ENCODE measurements at regions of chr2 and their contacts with region 1.

Region 1: DNA sequence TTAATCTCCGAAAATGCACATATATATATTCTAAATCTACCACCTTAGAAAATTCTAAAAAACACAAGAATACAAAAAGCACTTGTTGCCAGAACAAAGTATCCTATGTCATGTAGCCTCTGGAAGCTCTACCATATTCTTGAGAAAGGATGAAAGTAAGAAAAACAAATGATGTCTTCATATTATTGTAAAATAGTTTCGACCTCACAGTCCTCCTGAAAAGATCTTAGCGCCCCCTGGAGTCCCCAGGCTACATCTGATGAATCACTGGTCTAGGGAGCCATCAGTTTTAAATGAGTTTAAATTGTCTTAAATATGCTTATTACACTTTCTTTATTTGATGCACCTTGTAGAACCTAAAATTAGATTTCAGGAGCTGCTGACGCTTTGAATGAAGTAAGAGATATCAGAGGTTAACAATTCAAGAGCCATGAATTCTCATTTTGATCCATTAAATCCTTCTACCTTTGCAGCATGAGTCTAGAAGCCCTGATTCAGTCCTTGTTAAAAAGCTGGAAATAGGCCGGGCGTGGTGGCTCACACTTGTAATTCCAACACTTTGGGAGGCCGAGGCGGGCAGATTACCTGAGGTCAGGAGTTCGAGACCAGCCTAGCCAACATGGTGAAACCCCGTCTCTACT is 138.8 kb downstream of the MCFD2 start:
- DNase-seq: no peak
- H3K4me3 ChIP-seq: no peak overlapping the region
- CTCF ChIP-seq: peak; percentile 39

Region 2: DNA sequence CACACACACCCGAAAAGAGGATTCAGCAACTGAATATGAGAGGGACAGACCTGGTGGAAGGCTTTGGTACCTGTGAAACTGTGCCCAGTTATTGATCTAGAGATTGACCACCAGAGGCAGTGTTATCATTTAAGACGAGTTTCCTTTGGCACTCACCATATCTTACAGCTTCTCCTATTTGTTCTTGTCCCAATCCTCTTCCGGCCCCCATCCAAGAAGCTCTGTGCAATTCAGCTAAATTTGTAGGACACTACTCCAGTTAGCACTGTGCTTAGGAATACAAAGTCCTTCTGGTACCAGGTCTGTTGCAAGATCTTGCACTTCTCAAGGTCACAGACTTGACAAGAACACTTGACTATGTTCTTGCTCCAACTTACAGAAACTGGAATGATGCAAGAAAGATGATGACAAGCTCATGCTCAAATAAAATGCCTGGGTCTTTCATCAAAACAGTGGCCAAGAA is 119.7 kb before region 1 on chr2:
- CTCF ChIA-PET with region 1: interaction called, 15 read pairs
- POLR2A ChIA-PET with region 1: no interaction called
- DNase-seq: no peak
- H3K4me3 ChIP-seq: no peak overlapping the region
- CTCF ChIP-seq: peak; percentile 8

Region 3: GRCh38 chr2:46787364-46787763 is 10.6 kb after region 1 on chr2:
- CTCF ChIA-PET with region 1: interaction called, 38 read pairs
- POLR2A ChIA-PET with region 1: interaction called, 3 read pairs
- DNase-seq: no peak
- H3K4me3 ChIP-seq: no peak overlapping the region
- CTCF ChIP-seq: no peak

Region 4: DNA sequence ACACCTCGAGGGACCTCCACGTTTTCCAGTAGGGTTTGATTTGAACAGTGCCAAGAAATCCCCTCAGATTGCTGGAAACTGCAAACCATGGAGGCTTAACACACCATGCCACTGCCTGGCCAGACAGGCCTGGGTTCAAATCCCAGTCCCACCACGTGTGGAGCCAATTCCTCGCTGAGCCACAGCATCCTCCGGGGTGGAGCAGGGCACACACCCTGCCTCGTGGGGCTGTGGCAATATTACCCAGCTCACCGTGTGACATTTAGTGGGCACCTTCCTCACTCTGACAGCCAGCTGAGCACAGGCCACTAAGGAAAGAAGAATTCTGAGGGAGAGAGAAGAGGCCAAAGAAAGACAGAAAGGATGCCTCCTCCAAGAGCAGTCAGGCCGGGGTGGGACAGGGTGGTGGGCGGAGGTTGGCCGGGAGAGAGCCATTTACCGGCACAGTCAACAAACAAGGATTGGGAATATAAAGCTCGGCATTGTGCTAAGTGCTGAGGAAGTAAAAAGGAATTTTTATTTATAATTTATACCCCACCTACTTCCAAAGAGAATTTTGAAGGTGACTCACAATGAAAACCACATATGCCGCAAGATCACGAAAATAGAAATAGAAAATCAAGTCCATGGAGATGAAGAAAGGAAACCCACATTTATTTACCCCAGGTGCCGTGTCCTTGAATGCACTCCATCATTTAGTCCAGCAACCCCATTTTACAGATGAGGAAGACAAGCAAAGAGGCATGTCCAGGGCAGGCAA is 27.3 kb after region 1 on chr2:
- CTCF ChIA-PET with region 1: interaction called, 43 read pairs
- POLR2A ChIA-PET with region 1: interaction called, 3 read pairs
- DNase-seq: peak; percentile 81
- H3K4me3 ChIP-seq: no peak overlapping the region
- CTCF ChIP-seq: no peak

Region 5: GRCh38 chr2:46887028-46887885 is 110.5 kb after region 1 on chr2:
- CTCF ChIA-PET with region 1: interaction called, 11 read pairs
- POLR2A ChIA-PET with region 1: no interaction called
- DNase-seq: no peak
- H3K4me3 ChIP-seq: no peak overlapping the region
- CTCF ChIP-seq: no peak

Region 6: GRCh38 chr2:46942139-46942517 is 165.3 kb after region 1 on chr2:
- CTCF ChIA-PET with region 1: no interaction called
- POLR2A ChIA-PET with region 1: no interaction called
- DNase-seq: no peak
- H3K4me3 ChIP-seq: peak overlapping the region; percentile 91
- CTCF ChIP-seq: no peak

Measured in AG04449 (cell line).